Activated naive CD4-positive, alpha-beta T cell treated with anti-CD3 and anti-CD28 coated beads for 36 hours (primary cell): ENCODE measurements at regions of chr12 and their contacts with region 1.

Region 1: GRCh38 chr12:89709157-89709994 is 738 bp upstream of the ATP2B1 start:
- DNase-seq: peak; percentile 99
- H3K4me3 Mint-ChIP-seq: peak overlapping the region; percentile 79
- H3K27ac Mint-ChIP-seq: peak overlapping the region; percentile 71
- H3K4me1 Mint-ChIP-seq: peaks cover 32% of the 10 kb centered on the region
- H3K27me3 Mint-ChIP-seq: no peaks in the 10 kb centered on the region

Region 2: DNA sequence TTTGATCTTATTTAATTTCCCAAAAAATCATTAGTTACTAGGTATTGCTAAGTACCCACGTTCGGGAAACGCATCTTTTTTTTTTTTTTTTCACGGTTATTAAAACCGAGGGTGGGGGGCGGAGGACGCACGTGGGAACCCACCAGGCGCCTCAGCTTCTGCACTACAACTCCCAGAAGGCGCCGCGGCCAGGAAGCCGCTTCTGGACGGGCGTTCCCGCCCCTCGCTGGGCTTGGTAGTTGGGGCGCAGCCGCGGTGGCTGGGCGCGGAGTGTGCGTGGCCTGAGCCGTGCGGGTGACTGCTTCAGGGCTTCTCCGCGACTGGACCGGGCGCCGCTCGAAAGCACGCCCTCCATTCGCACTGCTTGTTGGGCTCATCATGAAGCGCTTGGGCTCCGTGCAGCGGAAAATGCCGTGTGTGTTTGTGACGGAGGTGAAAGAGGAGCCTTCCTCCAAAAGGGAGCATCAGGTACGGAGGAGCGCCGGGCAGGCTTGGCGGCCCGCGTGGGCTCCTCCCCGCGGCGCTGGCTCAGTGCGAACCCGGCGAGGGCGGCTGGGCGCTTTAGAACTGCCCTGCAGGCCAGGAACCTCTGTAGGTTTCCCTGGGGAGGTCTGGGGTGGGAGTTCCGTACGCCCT is 1674.0 kb before region 1 on chr12:
- CTCF ChIA-PET with region 1: no interaction called
- intact Hi-C with region 1: loop called (anchors 2 kb)
- DNase-seq: peak; percentile 89
- H3K4me3 Mint-ChIP-seq: peak overlapping the region; percentile 93
- H3K27ac Mint-ChIP-seq: peak overlapping the region; percentile 90
- H3K4me1 Mint-ChIP-seq: peaks cover 52% of the 10 kb centered on the region
- H3K27me3 Mint-ChIP-seq: no peaks in the 10 kb centered on the region

Region 3: DNA sequence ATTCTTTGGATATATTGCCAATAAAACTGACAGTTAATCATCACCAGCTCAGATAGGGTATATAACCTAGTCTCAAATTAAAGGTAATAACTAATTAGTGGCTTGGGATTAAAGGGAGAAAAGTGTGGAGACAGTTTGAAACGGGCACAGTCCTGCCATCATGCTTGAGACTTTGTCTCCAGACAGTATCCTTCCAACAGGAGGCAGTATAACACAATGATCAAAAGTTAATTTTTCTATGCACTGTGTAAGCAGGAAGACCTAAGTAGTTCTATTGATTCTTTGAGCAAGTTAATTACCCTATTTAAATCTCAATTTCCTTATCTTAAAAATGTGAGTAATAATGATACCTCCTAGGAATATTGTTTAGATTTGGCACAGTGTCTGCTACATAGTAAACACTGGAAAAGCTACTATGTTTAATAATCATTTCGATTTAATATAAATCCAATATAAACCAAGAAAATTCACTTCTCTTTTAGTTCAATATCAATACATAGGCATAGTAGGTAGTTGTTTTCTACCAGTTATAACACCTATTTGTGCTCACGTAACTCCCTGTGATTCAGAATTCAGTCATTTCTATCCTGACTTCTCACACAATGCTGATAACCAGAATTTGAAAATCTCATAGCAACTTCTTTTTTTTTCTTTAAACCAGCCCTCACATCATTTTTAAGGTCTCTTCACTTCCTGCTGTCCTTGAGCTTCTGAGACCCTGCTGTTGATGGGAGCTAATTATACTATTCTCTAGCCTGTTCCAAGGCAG is 238.5 kb before region 1 on chr12:
- CTCF ChIA-PET with region 1: no interaction called
- intact Hi-C with region 1: loop called (anchors 2 kb)
- DNase-seq: no peak
- H3K4me3 Mint-ChIP-seq: no peak overlapping the region
- H3K27ac Mint-ChIP-seq: no peak overlapping the region
- H3K4me1 Mint-ChIP-seq: peaks cover 44% of the 10 kb centered on the region
- H3K27me3 Mint-ChIP-seq: no peaks in the 10 kb centered on the region

Region 4: DNA sequence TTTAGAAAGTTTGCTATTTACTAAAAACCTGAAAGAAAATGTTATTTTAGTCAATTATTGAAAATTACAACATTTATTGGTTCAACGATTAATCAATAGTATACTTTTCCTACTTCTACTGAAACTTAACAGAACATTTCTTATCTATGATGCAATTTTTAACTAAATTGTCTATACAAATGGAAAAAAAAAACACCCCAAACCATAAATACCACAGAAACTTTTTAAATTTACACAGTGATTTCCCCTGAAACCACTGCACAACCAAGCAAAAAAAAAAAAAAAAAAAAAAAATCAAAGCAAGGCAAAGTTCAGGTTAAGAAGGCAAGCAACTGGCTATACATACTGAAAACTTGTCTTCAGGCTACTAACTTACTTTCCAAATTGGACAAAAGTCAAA is 111.6 kb before region 1 on chr12:
- CTCF ChIA-PET with region 1: no interaction called
- intact Hi-C with region 1: loop called (anchors 1 kb)
- DNase-seq: no peak
- H3K4me3 Mint-ChIP-seq: no peak overlapping the region
- H3K27ac Mint-ChIP-seq: peak overlapping the region; percentile 66
- H3K4me1 Mint-ChIP-seq: peaks cover 23% of the 10 kb centered on the region
- H3K27me3 Mint-ChIP-seq: no peaks in the 10 kb centered on the region

Region 5: DNA sequence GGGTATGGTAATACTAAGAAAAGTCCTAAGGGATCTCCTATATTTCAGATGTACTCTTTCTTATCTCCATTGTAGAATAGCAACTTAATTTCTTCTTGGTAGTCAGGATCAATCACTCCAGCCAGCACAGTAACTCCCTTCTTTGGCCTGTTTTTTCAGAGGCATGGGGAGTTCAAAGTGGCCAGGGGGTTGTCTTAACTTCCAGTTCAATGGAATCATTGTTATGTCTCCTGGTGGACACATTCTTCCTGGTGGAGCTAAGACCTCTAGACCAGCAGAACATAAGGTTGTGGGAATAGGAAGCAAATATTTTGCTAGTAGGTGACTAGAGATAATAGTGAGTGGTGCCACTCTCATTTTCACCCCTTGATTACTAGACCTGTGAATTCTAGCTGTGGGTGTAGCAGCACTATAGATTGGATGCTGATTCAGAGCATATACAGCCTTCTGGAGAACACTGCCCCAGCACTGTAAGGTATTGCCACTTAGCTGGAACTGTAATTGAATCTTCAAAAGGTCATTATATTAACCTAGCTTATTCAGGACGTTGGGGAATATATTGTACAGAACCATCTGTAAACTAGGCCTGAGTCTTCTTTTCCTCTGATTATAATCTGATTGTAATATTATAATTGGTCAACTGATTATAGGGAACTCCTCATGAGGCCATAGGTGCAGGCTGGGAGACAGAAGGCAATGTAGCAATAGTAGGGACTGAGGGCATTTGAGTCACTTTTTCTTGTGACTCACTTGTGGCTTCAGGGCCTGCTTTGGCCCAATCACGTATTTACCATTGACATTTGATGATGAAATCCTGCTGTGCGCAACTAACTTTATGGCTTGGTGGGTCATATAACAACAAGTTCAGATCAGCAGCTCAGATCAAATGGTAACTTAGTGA is 59.5 kb after region 1 on chr12:
- CTCF ChIA-PET with region 1: no interaction called
- intact Hi-C with region 1: no loop called
- DNase-seq: peak; percentile 25
- H3K4me3 Mint-ChIP-seq: no peak overlapping the region
- H3K27ac Mint-ChIP-seq: no peak overlapping the region
- H3K4me1 Mint-ChIP-seq: peaks cover 15% of the 10 kb centered on the region
- H3K27me3 Mint-ChIP-seq: no peaks in the 10 kb centered on the region

Region 6: GRCh38 chr12:89862511-89863179 is 153.3 kb after region 1 on chr12:
- CTCF ChIA-PET with region 1: no interaction called
- intact Hi-C with region 1: loop called (anchors 1 kb)
- DNase-seq: peak; percentile 57
- H3K4me3 Mint-ChIP-seq: peak overlapping the region; percentile 70
- H3K27ac Mint-ChIP-seq: peak overlapping the region; percentile 92
- H3K4me1 Mint-ChIP-seq: peaks cover 39% of the 10 kb centered on the region
- H3K27me3 Mint-ChIP-seq: no peaks in the 10 kb centered on the region

Region 7: GRCh38 chr12:90102957-90103652 is 393.7 kb after region 1 on chr12:
- CTCF ChIA-PET with region 1: interaction called, 4 read pairs
- intact Hi-C with region 1: loop called (anchors 1 kb)
- DNase-seq: peak; percentile 32
- H3K4me3 Mint-ChIP-seq: no peak overlapping the region
- H3K27ac Mint-ChIP-seq: no peak overlapping the region
- H3K4me1 Mint-ChIP-seq: peaks cover 8% of the 10 kb centered on the region
- H3K27me3 Mint-ChIP-seq: peaks cover 7% of the 10 kb centered on the region